ENCODE measurements at regions of chr22 and their contacts with region 1.

Region 1: DNA sequence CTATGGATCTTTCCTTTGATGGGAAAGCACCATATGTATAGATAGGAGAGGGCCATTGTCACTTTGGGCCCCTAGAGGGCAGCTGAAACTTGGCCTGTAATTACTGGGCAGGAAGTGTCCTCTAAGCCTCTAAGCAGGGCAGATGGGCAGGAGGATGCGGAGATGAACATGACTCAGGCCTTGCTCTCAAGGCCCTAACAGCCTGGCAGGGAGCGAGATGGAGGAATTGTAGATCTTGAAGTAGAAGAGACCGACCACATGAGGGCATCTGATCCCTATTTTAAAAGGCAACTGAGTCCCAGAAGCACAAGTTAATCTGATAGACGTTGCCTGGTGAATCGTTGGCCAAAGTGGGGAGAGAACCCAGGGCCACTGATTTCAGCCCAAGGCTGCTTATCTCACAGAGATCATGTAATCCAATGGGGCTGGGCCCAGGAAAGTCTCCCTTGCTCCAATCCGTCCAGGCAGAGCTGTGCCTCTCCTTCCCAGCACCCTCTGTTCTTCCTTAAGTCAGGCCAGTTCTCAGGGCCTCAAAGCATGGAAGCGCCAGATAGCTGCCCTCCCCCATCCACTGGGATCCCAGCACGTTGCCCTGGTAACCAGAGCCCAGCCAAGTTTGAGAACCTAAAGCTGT is 2.5 kb upstream of the SEPTIN3 start:
- DNase-seq: peak in 5 of 9 experiments; percentile 7 to 71 (median 33)
- ATAC-seq: peak; percentile 51
- H3K4me3 ChIP-seq: no peak overlapping the region
- H3K4me3 Mint-ChIP-seq: no peak overlapping the region
- H3K27ac ChIP-seq: no peak overlapping the region
- H3K27ac Mint-ChIP-seq: no peak overlapping the region
- H3K4me1 ChIP-seq: no peaks in the 10 kb centered on the region
- H3K4me1 Mint-ChIP-seq: no peaks in the 10 kb centered on the region
- H3K27me3 ChIP-seq: no peaks in the 10 kb centered on the region
- H3K27me3 Mint-ChIP-seq: peaks cover 3% of the 10 kb centered on the region
- CTCF ChIP-seq: no peak

Region 2: GRCh38 chr22:42084874-42085273 is 118.2 kb after region 1 on chr22:
- CTCF ChIA-PET with region 1: no interaction called
- POLR2A ChIA-PET with region 1: no interaction called
- intact Hi-C with region 1: no loop called
- DNase-seq: no peak
- ATAC-seq: no peak
- H3K4me3 ChIP-seq: no peak overlapping the region
- H3K4me3 Mint-ChIP-seq: no peak overlapping the region
- H3K27ac ChIP-seq: no peak overlapping the region
- H3K27ac Mint-ChIP-seq: no peak overlapping the region
- H3K4me1 ChIP-seq: peaks cover 23% of the 10 kb centered on the region
- H3K4me1 Mint-ChIP-seq: peaks cover 45% of the 10 kb centered on the region
- H3K27me3 ChIP-seq: no peaks in the 10 kb centered on the region
- H3K27me3 Mint-ChIP-seq: no peaks in the 10 kb centered on the region
- CTCF ChIP-seq: no peak

Region 3: DNA sequence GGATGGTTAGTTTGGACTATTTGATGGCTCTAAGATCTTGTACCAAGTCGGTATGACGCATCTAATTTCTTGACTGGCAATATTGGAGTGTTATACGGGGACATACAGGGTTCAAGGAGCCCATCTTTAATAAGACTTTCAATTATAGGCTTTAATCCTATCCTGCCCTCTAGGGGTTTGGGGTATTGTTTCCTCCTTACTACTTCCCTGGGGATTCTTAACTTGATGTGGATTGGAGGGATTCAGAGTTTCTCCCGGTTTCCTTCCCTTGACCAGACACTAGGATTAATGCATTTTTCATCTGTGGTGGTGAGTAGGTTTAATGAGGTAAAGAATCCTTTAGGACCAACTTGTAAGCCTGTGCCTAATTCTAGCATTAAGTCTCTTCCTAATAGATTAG is 145.1 kb after region 1 on chr22:
- CTCF ChIA-PET with region 1: interaction called, 4 read pairs
- POLR2A ChIA-PET with region 1: no interaction called
- intact Hi-C with region 1: loop called in 1 of 2 experiments (anchors 2 kb)
- DNase-seq: no peak
- ATAC-seq: no peak
- H3K4me3 ChIP-seq: no peak overlapping the region
- H3K4me3 Mint-ChIP-seq: no peak overlapping the region
- H3K27ac ChIP-seq: no peak overlapping the region
- H3K27ac Mint-ChIP-seq: no peak overlapping the region
- H3K4me1 ChIP-seq: no peaks in the 10 kb centered on the region
- H3K4me1 Mint-ChIP-seq: no peaks in the 10 kb centered on the region
- H3K27me3 ChIP-seq: no peaks in the 10 kb centered on the region
- H3K27me3 Mint-ChIP-seq: no peaks in the 10 kb centered on the region
- CTCF ChIP-seq: no peak

Region 4: DNA sequence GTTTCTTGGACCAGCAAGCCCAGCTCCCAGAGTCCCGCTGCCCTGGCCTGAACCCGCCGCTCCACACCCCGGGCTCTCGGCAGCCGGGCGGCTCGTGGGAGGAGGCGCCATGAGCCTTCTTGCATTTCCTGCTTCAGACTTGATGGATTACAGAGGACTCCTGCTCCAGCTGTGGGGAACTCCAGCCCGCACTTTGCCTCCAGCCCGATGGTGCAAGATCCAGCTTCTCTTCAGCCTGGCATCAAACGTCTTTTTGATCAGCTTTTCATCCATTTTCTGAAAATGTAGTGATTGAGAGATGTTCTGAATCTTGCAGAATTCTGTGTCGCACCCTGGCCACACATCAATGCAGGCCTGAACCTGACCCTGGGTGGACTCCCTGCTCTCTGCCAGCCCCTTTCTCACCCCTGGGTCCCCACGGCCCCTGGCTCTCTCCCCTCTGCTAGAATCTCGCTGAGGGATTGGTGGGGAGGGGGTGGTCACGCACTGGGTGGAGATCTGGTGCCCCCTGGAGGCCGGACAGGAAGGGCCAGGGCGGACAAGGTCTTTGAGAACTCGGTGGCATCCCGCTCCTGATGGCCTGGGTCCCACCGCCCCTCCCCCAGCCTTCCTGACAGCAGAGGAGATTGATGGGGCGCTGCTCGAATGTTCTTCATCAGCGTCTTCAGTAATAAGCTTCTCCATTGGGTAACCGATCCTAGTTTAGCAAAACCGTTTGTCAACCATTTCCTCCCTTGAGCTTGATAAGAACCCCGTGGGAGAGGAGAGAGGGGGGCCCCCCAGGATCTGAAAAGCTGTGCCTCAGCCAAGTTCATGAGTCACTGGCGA is 477.6 kb after region 1 on chr22:
- CTCF ChIA-PET with region 1: interaction called, 18 read pairs
- POLR2A ChIA-PET with region 1: no interaction called
- intact Hi-C with region 1: no loop called
- DNase-seq: peak; percentile 58 to 91 (median 78)
- ATAC-seq: peak; percentile 95
- H3K4me3 ChIP-seq: peak overlapping the region; percentile 45 to 47
- H3K4me3 Mint-ChIP-seq: peak overlapping the region; percentile 81
- H3K27ac ChIP-seq: peak overlapping the region; percentile 38 to 58
- H3K27ac Mint-ChIP-seq: peak overlapping the region; percentile 92
- H3K4me1 ChIP-seq: peaks cover 11% of the 10 kb centered on the region
- H3K4me1 Mint-ChIP-seq: peaks cover 22% of the 10 kb centered on the region
- H3K27me3 ChIP-seq: no peaks in the 10 kb centered on the region
- H3K27me3 Mint-ChIP-seq: no peaks in the 10 kb centered on the region
- CTCF ChIP-seq: peak; percentile 36

Region 5: GRCh38 chr22:42473484-42474193 is 506.9 kb after region 1 on chr22:
- CTCF ChIA-PET with region 1: no interaction called
- POLR2A ChIA-PET with region 1: no interaction called
- intact Hi-C with region 1: loop called in 1 of 2 experiments (anchors 10 kb)
- DNase-seq: peak in 3 of 9 experiments; percentile 9 to 54 (median 38)
- ATAC-seq: no peak
- H3K4me3 ChIP-seq: no peak overlapping the region
- H3K4me3 Mint-ChIP-seq: no peak overlapping the region
- H3K27ac ChIP-seq: no peak overlapping the region
- H3K27ac Mint-ChIP-seq: no peak overlapping the region
- H3K4me1 ChIP-seq: peaks cover 9% of the 10 kb centered on the region
- H3K4me1 Mint-ChIP-seq: peaks cover 8% of the 10 kb centered on the region
- H3K27me3 ChIP-seq: no peaks in the 10 kb centered on the region
- H3K27me3 Mint-ChIP-seq: no peaks in the 10 kb centered on the region
- CTCF ChIP-seq: peak; percentile 49

Region 6: DNA sequence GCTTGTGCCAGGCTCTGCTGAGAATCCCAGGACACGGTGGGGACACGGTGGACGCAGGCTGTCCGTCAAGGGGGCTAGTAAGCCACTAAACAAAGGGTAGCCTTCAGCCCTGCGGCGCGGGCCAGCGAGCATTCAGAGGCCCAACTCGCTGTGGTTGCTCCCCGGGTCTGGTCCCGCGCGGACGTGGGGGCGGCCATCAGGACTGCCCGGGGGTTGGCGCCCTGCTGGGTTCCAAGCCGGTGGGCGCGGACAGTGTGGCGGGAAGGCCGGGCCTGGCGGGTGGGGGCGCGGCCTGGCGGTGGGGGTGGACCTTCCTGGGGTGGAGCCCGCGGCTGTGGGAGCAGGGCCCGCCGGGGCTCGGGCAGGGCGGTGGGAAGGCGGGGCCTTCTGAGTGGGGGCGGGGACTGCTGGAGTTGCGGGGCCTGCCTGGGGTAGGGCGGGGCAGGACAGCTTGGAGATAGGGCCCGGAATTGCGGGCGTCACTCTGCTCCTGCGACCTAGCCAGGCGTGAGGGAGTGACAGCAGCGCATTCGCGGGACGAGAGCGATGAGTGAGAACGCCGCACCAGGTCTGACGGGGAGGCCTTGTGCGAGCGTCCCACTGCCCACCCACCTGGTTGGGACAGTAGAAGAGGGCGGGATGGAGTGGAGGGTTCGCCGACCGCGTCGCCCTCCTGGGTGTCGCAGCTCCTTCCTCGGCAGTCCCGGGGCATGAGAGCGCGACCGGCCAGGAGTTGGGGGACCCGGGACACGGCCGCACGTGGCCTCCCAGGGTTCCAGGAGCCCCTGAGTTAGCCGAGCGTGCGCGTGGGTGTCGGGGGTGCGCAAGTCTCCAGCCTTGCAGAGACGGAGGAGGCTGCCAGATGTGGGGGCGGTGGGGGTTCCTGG is 587.0 kb after region 1 on chr22 and contains the start of gene SERHL2:
- CTCF ChIA-PET with region 1: no interaction called
- POLR2A ChIA-PET with region 1: no interaction called
- intact Hi-C with region 1: loop called in 1 of 2 experiments (anchors 2 kb)
- DNase-seq: peak; percentile 61 to 93 (median 82)
- ATAC-seq: peak; percentile 95
- H3K4me3 ChIP-seq: peak within 1 kb of the TSS; percentile 54 to 81
- H3K4me3 Mint-ChIP-seq: peak within 1 kb of the TSS; percentile 81
- H3K27ac ChIP-seq: no peak within 1 kb of the TSS
- H3K27ac Mint-ChIP-seq: no peak within 1 kb of the TSS
- H3K4me1 ChIP-seq: peaks cover 12% of the 10 kb centered on the region
- H3K4me1 Mint-ChIP-seq: peaks cover 16% of the 10 kb centered on the region
- H3K27me3 ChIP-seq: no peaks in the 10 kb centered on the region
- H3K27me3 Mint-ChIP-seq: no peaks in the 10 kb centered on the region
- CTCF ChIP-seq: no peak
- total RNA-seq, gene SERHL2: 0.42 TPM in 1 of 2 experiments, not detected in the other

Measured in CD8-positive, alpha-beta T cell (primary cell).